AG04450 (cell line): ENCODE measurements at regions of chr19 and their contacts with region 1.

Region 1: DNA sequence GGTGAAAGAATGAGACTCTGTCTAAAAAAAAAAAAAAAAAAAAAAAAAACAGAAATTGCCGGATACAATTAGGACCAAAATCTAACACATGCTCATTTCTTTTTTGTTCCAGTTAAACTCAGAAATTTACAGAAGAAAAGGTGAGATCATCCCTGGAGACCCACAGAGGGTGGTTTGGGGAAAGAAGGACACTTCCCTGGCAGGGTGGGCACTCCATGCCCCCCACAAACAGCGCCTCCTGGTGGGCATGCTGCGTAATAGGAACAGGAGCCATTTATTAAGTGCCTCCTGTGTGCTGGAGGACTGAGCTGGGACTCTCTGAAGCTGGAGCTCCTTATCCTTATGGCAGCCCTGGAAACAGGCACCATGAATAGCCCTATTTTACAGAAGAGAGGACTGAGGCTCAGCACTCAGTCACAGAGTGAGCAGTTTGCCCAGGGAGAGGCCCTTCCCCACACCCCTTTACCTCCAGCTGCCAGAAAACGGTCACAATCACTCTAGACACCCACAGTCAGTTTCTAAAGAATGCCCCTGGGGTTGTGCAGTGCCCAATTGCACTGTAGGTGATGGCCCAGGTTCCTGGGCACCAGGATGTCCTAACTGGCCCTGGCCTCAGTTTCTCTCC is 10.1 kb downstream of the C19orf38 start:
- DNase-seq: no peak
- H3K4me3 ChIP-seq: no peak overlapping the region
- H3K27ac ChIP-seq: no peak overlapping the region
- H3K27me3 ChIP-seq: no peaks in the 10 kb centered on the region
- CTCF ChIP-seq: peak; percentile 86

Region 2: DNA sequence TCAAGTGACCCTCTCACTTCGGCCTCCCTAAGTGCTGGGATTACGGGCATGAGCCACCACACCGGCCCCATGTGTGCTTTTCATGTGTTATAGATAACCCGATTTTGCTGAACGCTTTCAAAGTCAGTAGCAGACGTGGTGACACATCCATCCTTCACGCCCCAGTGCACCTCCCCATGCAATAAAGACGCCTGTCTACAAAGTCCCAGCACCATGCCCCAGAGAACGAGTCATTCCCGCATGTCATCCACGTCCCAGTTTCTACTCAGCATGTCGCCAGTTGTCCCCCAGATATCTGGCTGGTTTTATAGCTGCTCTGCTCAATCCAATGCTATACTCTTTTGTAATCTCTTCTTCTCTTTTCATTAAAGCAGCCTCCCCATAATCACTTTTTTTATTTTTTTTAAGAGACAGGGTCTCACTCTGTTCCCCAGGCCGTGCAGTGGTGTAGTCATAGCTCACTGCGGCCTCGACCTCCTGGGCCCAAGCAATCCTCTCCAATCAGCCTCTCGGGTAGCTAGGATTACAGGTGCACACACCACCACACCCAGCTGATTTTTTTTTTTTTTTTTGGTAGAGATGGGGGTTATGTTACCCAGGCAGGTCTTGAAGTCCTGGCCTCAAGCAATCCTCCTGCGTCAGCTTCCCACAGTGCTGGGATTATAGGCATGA is 97.9 kb before region 1 on chr19:
- CTCF ChIA-PET with region 1: no interaction called
- POLR2A ChIA-PET with region 1: no interaction called
- DNase-seq: no peak
- H3K4me3 ChIP-seq: no peak overlapping the region
- H3K27ac ChIP-seq: no peak overlapping the region
- H3K27me3 ChIP-seq: no peaks in the 10 kb centered on the region
- CTCF ChIP-seq: no peak

Region 3: DNA sequence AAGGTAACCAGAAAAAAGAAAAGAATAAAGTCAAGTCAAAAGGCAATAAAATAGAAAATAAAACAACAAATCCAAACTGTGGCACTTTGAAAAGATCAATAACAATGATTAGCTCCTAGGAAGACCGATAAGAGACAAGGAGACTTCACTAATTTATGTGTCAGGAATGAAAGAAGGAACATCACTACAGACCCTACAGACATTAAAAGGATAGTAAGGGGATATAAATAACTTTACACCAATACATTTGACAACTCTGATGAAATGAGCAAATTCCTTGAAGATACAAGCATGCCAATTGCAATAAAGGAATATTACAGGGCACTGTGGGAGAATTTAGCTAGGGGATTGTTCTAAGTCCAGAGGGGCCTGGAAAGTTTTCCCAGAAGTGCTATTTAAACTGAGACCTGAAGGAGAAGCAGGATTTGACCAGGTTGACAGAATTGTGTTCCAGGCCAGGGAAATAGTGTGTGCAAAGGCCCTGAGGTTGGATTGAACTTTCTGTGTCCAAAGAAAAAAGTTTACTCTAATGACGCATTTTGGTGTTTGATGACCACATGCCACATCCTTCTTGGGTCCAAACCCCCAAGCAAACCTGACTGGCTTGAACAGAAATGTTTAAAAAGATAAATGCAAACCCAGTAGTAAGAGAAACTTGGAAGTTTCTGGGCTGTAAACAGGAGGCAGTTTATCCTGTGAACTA is 11.7 kb before region 1 on chr19:
- CTCF ChIA-PET with region 1: interaction called, 116 read pairs
- POLR2A ChIA-PET with region 1: no interaction called
- DNase-seq: no peak
- H3K4me3 ChIP-seq: no peak overlapping the region
- H3K27ac ChIP-seq: no peak overlapping the region
- H3K27me3 ChIP-seq: peaks cover 4% of the 10 kb centered on the region
- CTCF ChIP-seq: no peak

Region 4: DNA sequence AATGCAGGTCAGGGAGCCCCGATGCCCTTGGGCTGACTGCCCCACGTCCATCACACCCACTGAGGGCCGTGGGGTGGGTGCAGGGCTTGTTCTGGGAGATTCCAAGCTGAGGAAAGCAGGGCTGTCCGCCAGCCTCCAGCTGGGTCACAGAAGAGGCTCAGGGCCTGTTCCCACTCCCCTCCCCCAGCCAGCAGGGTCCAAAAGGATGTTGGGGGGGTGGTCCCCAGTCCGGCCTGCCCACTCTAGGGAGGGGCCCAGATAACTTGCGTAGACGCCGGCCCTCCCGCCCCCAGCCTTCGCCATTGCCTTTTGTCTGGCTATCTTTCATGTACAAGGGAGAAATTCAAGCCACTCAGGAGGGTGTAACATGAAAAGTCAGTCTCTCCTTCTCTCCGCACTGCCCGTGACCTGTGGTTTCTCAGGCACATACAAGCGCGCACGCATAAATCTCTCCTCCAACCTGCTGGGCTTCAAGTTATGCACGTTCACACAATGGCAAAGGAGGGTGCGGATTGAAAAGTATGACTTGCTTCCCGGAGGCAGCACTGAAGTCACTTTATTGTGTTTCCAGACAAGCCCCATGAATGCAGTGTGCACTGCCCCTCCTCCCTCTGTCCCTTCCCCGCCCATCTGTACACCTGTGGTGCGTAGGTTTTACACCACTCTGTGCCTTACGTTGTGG is 33.2 kb after region 1 on chr19:
- CTCF ChIA-PET with region 1: interaction called, 18 read pairs
- POLR2A ChIA-PET with region 1: no interaction called
- DNase-seq: no peak
- H3K4me3 ChIP-seq: no peak overlapping the region
- H3K27ac ChIP-seq: no peak overlapping the region
- H3K27me3 ChIP-seq: no peaks in the 10 kb centered on the region
- CTCF ChIP-seq: no peak